ENCODE measurements at regions of chr3 and their contacts with region 1.

Region 1: GRCh38 chr3:114632757-114633424 is 339.1 kb downstream of the TIGIT start:
- DNase-seq: no peak
- H3K4me3 Mint-ChIP-seq: no peak overlapping the region
- H3K27ac Mint-ChIP-seq: peak overlapping the region; percentile 60
- H3K4me1 Mint-ChIP-seq: no peaks in the 10 kb centered on the region
- H3K27me3 Mint-ChIP-seq: no peaks in the 10 kb centered on the region

Region 2: DNA sequence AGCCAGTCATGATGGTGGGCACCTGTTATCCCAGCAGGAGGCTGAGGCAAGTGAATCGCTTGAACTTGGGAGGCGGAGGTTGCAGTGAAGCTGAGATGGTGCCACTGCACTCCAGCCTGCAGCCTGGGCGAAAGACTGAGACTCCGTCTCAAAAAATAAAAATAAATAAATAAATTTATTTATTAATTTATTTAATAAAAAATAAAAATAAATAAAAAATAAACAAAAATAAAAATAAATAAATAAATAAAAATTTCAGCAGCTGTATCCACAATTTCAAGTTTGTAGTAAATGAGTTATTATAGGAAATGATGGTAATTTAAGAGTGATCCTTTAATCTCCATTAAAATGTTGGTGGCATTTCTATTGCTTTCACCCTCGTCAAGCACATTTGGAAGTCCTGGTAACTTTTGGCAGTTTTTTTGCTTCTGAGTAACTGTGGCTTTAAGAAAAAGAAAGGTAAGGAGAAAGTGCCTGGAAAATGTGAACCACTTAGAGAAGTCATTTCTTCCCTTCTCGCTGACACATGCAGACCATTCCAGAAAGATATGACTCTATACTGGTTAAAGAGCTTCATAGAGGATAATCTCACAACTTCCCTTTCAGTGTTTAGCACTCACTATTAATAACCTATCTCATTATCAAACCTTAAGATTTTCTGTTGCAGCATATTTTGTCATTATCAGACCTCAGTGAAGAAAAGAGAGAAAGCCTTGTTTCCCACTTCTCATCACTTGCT is 42.4 kb before region 1 on chr3:
- intact Hi-C with region 1: loop called (anchors 2 kb)
- DNase-seq: no peak
- H3K4me3 Mint-ChIP-seq: no peak overlapping the region
- H3K27ac Mint-ChIP-seq: no peak overlapping the region
- H3K4me1 Mint-ChIP-seq: no peaks in the 10 kb centered on the region
- H3K27me3 Mint-ChIP-seq: no peaks in the 10 kb centered on the region

Region 3: DNA sequence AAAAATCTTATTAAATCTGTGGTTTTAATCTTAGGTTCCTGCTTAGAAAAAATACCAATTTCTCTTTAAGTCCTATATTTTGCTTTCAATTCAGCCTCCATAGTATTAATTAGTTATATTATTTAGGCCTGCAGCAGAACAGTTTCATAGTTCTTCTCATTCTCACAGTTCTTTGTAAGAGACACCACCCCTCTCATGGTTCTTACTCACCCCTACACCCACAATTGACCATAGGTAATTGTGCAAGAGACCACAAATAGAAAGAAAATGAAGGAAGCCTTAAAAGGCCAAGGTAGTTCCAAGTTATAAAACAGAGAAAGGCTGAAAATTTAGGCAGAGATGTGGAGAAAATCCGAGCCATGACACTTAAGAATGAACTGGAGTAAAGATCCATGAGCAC is 76.2 kb after region 1 on chr3:
- intact Hi-C with region 1: loop called (anchors 2 kb)
- DNase-seq: no peak
- H3K4me3 Mint-ChIP-seq: no peak overlapping the region
- H3K27ac Mint-ChIP-seq: no peak overlapping the region
- H3K4me1 Mint-ChIP-seq: peaks cover 8% of the 10 kb centered on the region
- H3K27me3 Mint-ChIP-seq: no peaks in the 10 kb centered on the region